Activated T-helper 1 cell treated with anti-CD3 and anti-CD28 coated beads, Interleukin-12 subunit alpha, Interleukin-12 subunit beta, Interleukin-2, Interleukin-4 antibody, amounts not matched to agents 30 ng/mL and 10 ng/mL and 1 ng/mL, durations not matched to agents 14 hours and 24 hours and 36 hours (primary cell): ENCODE measurements at regions of chrX and their contacts with region 1.

Region 1: DNA sequence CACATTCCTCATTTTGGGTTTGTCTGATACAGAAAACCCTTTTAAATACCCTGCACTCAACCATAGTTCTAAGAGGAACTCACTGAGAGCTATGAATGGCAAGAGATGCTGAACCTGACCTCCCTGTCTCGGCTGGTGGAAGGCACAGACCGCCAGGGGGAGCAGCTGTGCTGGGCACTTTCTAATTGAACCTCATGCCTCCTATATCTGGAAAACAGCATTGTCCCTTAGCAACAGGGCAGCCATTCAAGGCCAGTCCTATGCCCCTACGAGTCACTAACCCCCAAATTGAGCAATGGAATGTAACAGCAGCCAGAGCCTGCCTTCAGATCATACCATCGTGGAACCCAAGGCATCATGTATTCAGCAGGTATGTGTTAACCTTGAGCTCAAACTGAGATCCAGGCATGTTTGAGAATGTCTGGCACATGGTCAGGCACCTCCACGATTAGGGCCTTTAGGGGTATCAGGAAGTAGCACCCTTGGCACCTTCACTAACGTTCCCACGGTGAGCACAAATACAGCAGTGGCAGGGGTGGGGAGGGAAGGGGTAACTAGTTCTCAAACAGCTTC is 5.1 kb downstream of the USP27X start:
- DNase-seq: peak; percentile 16
- H3K4me3 Mint-ChIP-seq: no peak overlapping the region
- H3K27ac Mint-ChIP-seq: no peak overlapping the region
- H3K4me1 Mint-ChIP-seq: peaks cover 10% of the 10 kb centered on the region
- H3K27me3 Mint-ChIP-seq: no peaks in the 10 kb centered on the region

Region 2: DNA sequence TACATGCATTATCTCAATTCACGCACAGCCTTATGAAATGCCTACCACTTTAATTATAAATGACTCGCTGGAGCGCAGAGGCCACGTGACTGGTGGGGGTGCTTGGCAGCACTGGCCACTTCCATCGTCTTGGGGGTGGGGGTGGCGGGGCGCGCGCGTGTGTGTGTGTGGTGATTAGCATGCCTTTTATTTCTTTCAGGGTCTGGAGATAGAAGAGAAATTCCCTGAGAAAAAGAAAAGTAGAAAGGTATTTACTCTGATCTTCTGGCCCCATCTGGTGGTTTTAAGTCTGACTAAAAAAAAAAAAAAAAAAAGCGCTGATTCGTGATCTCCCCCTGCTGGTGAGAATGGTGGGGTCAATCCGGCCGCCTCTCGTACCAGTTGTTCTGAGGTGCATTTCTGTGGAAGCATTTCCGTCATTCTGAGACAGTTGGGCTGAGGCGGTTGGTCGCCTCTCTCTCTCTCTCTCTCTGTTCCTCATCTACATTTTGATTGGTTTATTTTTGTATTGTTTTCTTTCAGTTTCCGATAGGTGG is 320.1 kb after region 1 on chrX and contains the start of gene CCNB3:
- intact Hi-C with region 1: loop called (anchors 1 kb)
- DNase-seq: peak; percentile 60
- H3K4me3 Mint-ChIP-seq: peak within 1 kb of the TSS; percentile 86
- H3K27ac Mint-ChIP-seq: peak within 1 kb of the TSS; percentile 94
- H3K4me1 Mint-ChIP-seq: peaks cover 17% of the 10 kb centered on the region
- H3K27me3 Mint-ChIP-seq: no peaks in the 10 kb centered on the region
- total RNA-seq, gene CCNB3: 0.64 and 0.80 TPM in 2 replicates

Region 3: GRCh38 chrX:50579955-50580354 is 695.6 kb after region 1 on chrX:
- intact Hi-C with region 1: loop called (anchors 10 kb)
- DNase-seq: no peak
- H3K4me3 Mint-ChIP-seq: no peak overlapping the region
- H3K27ac Mint-ChIP-seq: no peak overlapping the region
- H3K4me1 Mint-ChIP-seq: no peaks in the 10 kb centered on the region
- H3K27me3 Mint-ChIP-seq: peaks cover 2% of the 10 kb centered on the region